HepG2 (cell line): ENCODE measurements at regions of chr9 and their contacts with region 1.

Region 1: DNA sequence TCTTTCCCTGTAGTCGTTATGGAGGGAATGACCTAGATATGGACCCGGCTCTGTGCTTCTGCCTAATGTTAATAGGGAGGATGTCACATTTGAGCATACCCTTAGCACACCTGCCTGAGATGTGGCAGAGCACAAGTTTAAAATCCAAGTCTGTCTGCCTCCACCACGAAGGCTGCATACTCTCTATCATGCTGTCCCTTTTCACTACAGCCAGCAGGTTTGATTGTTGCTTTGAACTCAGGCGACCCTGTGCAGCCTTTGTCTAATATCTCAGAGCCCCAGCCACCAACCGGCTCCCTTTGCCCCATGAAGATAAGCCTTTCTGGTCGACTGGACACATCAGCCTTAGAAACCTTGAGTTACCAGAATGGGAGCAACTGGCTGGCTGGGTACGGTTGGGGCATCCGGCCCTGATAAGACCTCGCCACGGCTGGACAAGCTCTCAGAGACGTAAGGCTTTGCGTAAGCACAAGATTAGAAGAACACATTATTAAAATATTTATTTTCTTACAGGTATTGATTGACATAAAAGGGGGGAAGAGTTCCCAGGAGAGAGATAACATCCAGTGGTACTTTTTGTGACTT is 222.0 kb upstream of the TRIM32 start:
- DNase-seq: no peak
- ATAC-seq: no peak
- H3K4me3 ChIP-seq: no peak overlapping the region
- H3K27ac ChIP-seq: no peak overlapping the region
- H3K4me1 ChIP-seq: no peaks in the 10 kb centered on the region
- H3K27me3 ChIP-seq: no peaks in the 10 kb centered on the region
- CTCF ChIP-seq: no peak
- EP300 ChIP-seq: no peak
- POLR2A ChIP-seq: no peak
- RAD21 ChIP-seq: no peak

Region 2: GRCh38 chr9:116337015-116337414 is 128.1 kb before region 1 on chr9:
- CTCF ChIA-PET with region 1: no interaction called
- POLR2A ChIA-PET with region 1: no interaction called
- in situ Hi-C with region 1: no loop called
- intact Hi-C with region 1: loop called (anchors 10 kb)
- DNase-seq: no peak
- ATAC-seq: peak; percentile 56
- H3K4me3 ChIP-seq: no peak overlapping the region
- H3K27ac ChIP-seq: no peak overlapping the region
- H3K4me1 ChIP-seq: peaks cover 56% of the 10 kb centered on the region
- H3K27me3 ChIP-seq: peaks cover 1 to 31% of the 10 kb centered on the region in 2 experiments; a peak in 4 of 5 replicates
- CTCF ChIP-seq: no peak
- EP300 ChIP-seq: no peak
- POLR2A ChIP-seq: no peak
- RAD21 ChIP-seq: no peak

Region 3: DNA sequence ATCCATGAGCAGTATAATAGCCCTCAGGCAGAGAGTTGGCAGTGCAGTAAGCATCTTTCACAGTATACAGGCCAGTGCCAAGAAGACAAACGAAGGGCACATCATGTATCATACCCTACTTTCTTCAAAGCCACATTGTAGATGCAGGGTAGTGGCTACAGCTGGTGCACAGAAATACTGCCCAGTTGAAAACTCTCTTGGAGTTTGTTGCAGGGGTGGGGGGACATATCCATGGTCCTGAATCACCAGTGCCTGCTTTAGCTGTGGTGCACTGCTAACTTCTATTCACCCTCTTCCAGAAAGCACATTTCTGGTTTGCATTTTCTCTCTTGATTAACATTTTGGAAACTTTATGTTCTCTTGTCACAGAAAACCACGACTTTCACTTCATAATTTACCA is 114.9 kb before region 1 on chr9:
- CTCF ChIA-PET with region 1: no interaction called
- POLR2A ChIA-PET with region 1: no interaction called
- in situ Hi-C with region 1: no loop called
- intact Hi-C with region 1: no loop called
- DNase-seq: no peak
- ATAC-seq: no peak
- H3K4me3 ChIP-seq: no peak overlapping the region
- H3K27ac ChIP-seq: no peak overlapping the region
- H3K4me1 ChIP-seq: peaks cover 20% of the 10 kb centered on the region
- H3K27me3 ChIP-seq: no peaks in the 10 kb centered on the region
- CTCF ChIP-seq: no peak
- EP300 ChIP-seq: no peak
- POLR2A ChIP-seq: no peak
- RAD21 ChIP-seq: no peak

Region 4: GRCh38 chr9:117718085-117718484 is 1253.0 kb after region 1 on chr9:
- CTCF ChIA-PET with region 1: no interaction called
- POLR2A ChIA-PET with region 1: no interaction called
- in situ Hi-C with region 1: no loop called
- intact Hi-C with region 1: no loop called
- DNase-seq: no peak
- ATAC-seq: no peak
- H3K4me3 ChIP-seq: no peak overlapping the region
- H3K27ac ChIP-seq: no peak overlapping the region
- H3K4me1 ChIP-seq: no peaks in the 10 kb centered on the region
- H3K27me3 ChIP-seq: no peaks in the 10 kb centered on the region
- CTCF ChIP-seq: no peak
- EP300 ChIP-seq: no peak
- POLR2A ChIP-seq: no peak
- RAD21 ChIP-seq: no peak